ENCODE measurements at regions of chr15 and their contacts with region 1.

Region 1: GRCh38 chr15:36370735-36371115 is 208.7 kb upstream of the CDIN1 start:
- DNase-seq: peak in 1 of 2 experiments; percentile 96
- H3K4me3 ChIP-seq: no peak overlapping the region
- H3K27ac ChIP-seq: peak overlapping the region; percentile 94
- H3K4me1 ChIP-seq: peaks cover 73% of the 10 kb centered on the region
- H3K27me3 ChIP-seq: no peaks in the 10 kb centered on the region
- CTCF ChIP-seq: no peak

Region 2: GRCh38 chr15:35751413-35752133 is 619.2 kb before region 1 on chr15:
- CTCF ChIA-PET with region 1: no interaction called
- POLR2A ChIA-PET with region 1: no interaction called
- intact Hi-C with region 1: loop called (anchors 2 kb)
- DNase-seq: peak in 1 of 2 experiments; percentile 54
- H3K4me3 ChIP-seq: no peak overlapping the region
- H3K27ac ChIP-seq: no peak overlapping the region
- H3K4me1 ChIP-seq: no peaks in the 10 kb centered on the region
- H3K27me3 ChIP-seq: no peaks in the 10 kb centered on the region
- CTCF ChIP-seq: peak; percentile 71

Region 3: DNA sequence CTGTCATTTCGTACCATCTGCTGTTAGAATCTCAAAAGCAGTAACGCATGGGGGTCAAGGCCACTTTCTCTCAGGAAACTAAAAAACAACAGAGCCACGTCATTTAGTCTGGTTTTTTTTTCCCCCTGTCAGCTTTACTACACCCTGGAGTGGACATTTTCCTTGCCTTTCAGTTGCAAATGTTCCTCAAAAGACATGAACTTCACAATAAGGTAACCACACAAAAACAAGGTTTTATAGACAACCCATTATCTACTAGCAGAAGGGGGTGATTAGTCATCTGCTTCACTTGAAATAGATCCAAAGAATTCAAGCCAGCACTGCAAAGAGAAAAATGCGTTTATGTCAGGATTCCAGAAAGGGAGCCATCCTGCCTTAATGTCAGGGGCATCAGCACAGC is 36.9 kb after region 1 on chr15:
- CTCF ChIA-PET with region 1: no interaction called
- POLR2A ChIA-PET with region 1: interaction called, 11 read pairs
- intact Hi-C with region 1: no loop called
- DNase-seq: no peak
- H3K4me3 ChIP-seq: no peak overlapping the region
- H3K27ac ChIP-seq: no peak overlapping the region
- H3K4me1 ChIP-seq: no peaks in the 10 kb centered on the region
- H3K27me3 ChIP-seq: no peaks in the 10 kb centered on the region
- CTCF ChIP-seq: no peak

Region 4: DNA sequence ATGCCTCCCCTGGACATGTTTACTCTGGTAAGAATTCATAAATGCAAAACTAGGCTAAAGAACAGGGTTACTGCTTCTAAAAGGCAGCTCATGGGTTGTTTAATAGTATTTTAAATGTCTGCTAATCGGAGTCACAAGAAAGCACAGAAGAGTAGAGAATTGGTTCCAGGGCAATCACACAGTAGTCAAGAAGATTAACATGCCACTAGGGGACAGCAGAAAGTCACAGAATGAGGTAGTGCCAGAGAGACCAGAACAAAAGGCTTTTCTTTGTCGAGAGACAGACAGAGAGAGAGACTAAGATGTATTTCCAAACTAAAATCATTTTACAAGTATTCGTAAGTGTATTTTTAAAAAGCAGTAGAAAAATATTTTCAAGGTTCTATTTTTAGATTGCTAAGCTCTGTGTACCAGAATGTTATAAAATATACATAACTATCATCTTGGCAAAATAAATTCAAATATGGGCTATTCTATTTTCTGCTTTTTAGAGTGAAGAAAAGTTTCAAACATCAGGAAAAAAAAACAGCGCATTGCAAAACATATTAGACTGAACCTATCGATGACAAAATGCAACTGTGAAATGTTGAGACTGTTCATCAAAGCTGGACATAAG is 130.4 kb after region 1 on chr15:
- CTCF ChIA-PET with region 1: no interaction called
- POLR2A ChIA-PET with region 1: no interaction called
- intact Hi-C with region 1: loop called (anchors 5 kb)
- DNase-seq: peak in 1 of 2 experiments; percentile 27
- H3K4me3 ChIP-seq: no peak overlapping the region
- H3K27ac ChIP-seq: no peak overlapping the region
- H3K4me1 ChIP-seq: no peaks in the 10 kb centered on the region
- H3K27me3 ChIP-seq: no peaks in the 10 kb centered on the region
- CTCF ChIP-seq: peak; percentile 59

Region 5: GRCh38 chr15:36737430-36737891 is 366.7 kb after region 1 on chr15:
- CTCF ChIA-PET with region 1: no interaction called
- POLR2A ChIA-PET with region 1: interaction called, 18 read pairs
- intact Hi-C with region 1: no loop called
- DNase-seq: peak in 1 of 2 experiments; percentile 65
- H3K4me3 ChIP-seq: no peak overlapping the region
- H3K27ac ChIP-seq: 0 out of 2 replicates have a peak overlapping the region, but pooled peaks have one; percentile 12
- H3K4me1 ChIP-seq: peaks cover 11% of the 10 kb centered on the region
- H3K27me3 ChIP-seq: no peaks in the 10 kb centered on the region
- CTCF ChIP-seq: no peak